ENCODE measurements at regions of chr1 and their contacts with region 1.

Region 1: GRCh38 chr1:186295980-186296379 is 79.1 kb downstream of the TPR start:
- DNase-seq: no peak
- H3K4me3 Mint-ChIP-seq: no peak within 1 kb of the TSS
- H3K27ac Mint-ChIP-seq: no peak within 1 kb of the TSS
- H3K4me1 Mint-ChIP-seq: peaks cover 25% of the 10 kb centered on the region
- H3K27me3 Mint-ChIP-seq: no peaks in the 10 kb centered on the region

Region 2: GRCh38 chr1:185044981-185045813 is 1250.8 kb before region 1 on chr1 and contains the start of gene RNF2:
- intact Hi-C with region 1: loop called (anchors 10 kb)
- DNase-seq: peak; percentile 67
- H3K4me3 Mint-ChIP-seq: peak within 1 kb of the TSS; percentile 87
- H3K27ac Mint-ChIP-seq: peak within 1 kb of the TSS; percentile 80
- H3K4me1 Mint-ChIP-seq: peaks cover 21% of the 10 kb centered on the region
- H3K27me3 Mint-ChIP-seq: peaks cover 13% of the 10 kb centered on the region
- total RNA-seq, gene RNF2: 25.7 and 30.6 TPM in 2 replicates

Measured in activated T-helper 2 cell treated with anti-CD3 and anti-CD28 coated beads, Interferon-gamma antibody, Interleukin-2, Interleukin-4, amounts not matched to agents 10 μg/mL and 5 μg/mL and 100 μg/mL, durations not matched to agents 14 hours and 24 hours and 36 hours (primary cell).